B cell (primary cell): ENCODE measurements at regions of chr6 and their contacts with region 1.

Region 1: DNA sequence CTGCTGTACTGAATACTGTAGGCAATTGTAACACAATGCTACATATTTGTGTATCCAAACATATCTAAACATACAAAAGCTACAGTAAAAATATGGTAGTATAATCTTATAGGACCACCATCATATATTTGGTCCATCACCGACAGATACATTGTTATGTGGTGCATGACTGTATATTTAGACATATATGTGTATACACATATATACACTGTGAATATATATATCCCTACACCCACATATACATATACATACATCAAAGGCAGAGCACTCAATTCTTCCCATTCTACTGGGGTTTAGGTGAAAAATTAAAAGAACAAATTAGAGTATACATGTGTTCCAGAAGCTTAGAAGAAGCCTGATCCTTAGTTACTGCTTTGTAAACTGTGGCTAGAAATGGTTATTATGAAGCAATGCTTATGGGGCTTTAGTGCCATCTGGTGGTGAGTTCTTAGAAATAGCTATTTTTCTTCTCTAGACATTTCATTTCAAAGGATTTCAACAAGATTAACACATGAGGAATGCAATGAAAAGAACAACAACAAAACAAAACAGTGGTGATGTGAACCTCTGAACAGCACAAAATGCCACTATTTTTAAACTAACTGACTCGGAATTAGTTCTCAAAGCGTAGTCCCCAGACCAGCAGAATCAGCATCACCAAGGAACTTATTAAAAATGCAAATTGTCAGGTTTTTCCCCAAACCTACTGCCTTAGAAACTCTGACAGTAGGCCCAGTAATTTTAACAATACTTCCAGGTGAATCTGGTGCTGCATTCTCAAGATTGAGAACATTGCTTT is 38.0 kb downstream of the PKHD1 start:
- DNase-seq: peak; percentile 45
- ATAC-seq: no peak
- H3K4me3 ChIP-seq: no peak overlapping the region
- H3K4me3 Mint-ChIP-seq: no peak overlapping the region
- H3K27ac ChIP-seq: no peak overlapping the region
- H3K27ac Mint-ChIP-seq: no peak overlapping the region
- H3K4me1 ChIP-seq: no peaks in the 10 kb centered on the region
- H3K4me1 Mint-ChIP-seq: no peaks in the 10 kb centered on the region
- H3K27me3 ChIP-seq: no peaks in the 10 kb centered on the region
- H3K27me3 Mint-ChIP-seq: peaks cover 24% of the 10 kb centered on the region
- CTCF ChIP-seq: peak; percentile 78

Region 2: GRCh38 chr6:52009466-52010140 is 39.8 kb before region 1 on chr6:
- CTCF ChIA-PET with region 1: no interaction called
- POLR2A ChIA-PET with region 1: no interaction called
- intact Hi-C with region 1: no loop called
- DNase-seq: no peak
- ATAC-seq: no peak
- H3K4me3 ChIP-seq: no peak overlapping the region
- H3K4me3 Mint-ChIP-seq: no peak overlapping the region
- H3K27ac ChIP-seq: no peak overlapping the region
- H3K27ac Mint-ChIP-seq: no peak overlapping the region
- H3K4me1 ChIP-seq: no peaks in the 10 kb centered on the region
- H3K4me1 Mint-ChIP-seq: no peaks in the 10 kb centered on the region
- H3K27me3 ChIP-seq: peaks cover 0 to 8% (median 0%) of the 10 kb centered on the region in 4 experiments
- H3K27me3 Mint-ChIP-seq: peaks cover 16% of the 10 kb centered on the region
- CTCF ChIP-seq: no peak

Region 3: DNA sequence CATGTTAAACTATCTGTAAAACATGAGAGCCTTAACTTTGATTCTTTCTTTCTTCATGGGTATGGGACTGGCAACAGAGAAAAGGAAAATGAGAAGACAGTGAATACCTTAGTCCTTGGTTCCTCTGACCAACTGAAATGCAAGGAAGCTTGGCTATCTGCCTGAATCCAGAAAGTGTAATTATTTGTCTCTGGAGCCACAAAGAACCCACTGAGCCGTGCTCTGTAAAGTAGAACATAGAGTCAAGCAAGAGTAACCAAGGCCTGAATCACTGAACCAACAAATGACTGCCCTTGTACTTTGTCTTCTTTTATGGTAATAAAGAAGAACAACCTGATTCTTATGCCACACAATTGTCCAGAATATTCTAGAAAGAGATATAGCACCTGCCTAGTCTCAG is 10.4 kb after region 1 on chr6:
- CTCF ChIA-PET with region 1: interaction called, 14 read pairs
- POLR2A ChIA-PET with region 1: no interaction called
- intact Hi-C with region 1: no loop called
- DNase-seq: no peak
- ATAC-seq: no peak
- H3K4me3 ChIP-seq: no peak overlapping the region
- H3K4me3 Mint-ChIP-seq: no peak overlapping the region
- H3K27ac ChIP-seq: no peak overlapping the region
- H3K27ac Mint-ChIP-seq: no peak overlapping the region
- H3K4me1 ChIP-seq: peaks cover 9% of the 10 kb centered on the region in 2 donors
- H3K4me1 Mint-ChIP-seq: peaks cover 10% of the 10 kb centered on the region
- H3K27me3 ChIP-seq: no peaks in the 10 kb centered on the region
- H3K27me3 Mint-ChIP-seq: peaks cover 4% of the 10 kb centered on the region
- CTCF ChIP-seq: no peak